ENCODE measurements at regions of chr11 and their contacts with region 1.

Region 1: DNA sequence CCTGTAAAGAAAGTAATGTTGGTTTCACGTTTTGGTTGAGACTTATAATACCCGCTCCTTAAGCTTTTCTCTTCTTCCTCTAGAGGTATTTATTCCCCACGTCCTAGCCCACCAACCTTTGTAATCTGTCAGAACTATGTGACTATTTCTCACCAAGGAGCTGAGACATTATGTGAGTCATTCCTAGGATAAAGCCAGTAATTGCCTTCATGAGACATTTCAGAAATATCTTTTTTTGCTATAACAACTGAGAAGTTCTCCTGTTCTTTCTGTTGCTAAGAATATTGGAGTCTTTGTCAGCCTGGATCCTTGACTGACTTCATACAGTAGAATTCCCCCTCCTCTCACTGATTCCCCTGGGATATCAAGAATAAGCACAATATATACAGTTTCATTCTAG is 1497.0 kb upstream of the TENM4 start:
- DNase-seq: no peak
- ATAC-seq: no peak
- H3K4me3 ChIP-seq: no peak overlapping the region
- H3K27ac ChIP-seq: no peak overlapping the region
- H3K4me1 ChIP-seq: no peaks in the 10 kb centered on the region
- H3K27me3 ChIP-seq: no peaks in the 10 kb centered on the region
- CTCF ChIP-seq: no peak

Region 2: GRCh38 chr11:80798174-80798573 is 139.7 kb before region 1 on chr11:
- intact Hi-C with region 1: no loop called
- DNase-seq: no peak
- ATAC-seq: no peak
- H3K4me3 ChIP-seq: no peak overlapping the region
- H3K27ac ChIP-seq: no peak overlapping the region
- H3K4me1 ChIP-seq: no peaks in the 10 kb centered on the region
- H3K27me3 ChIP-seq: peaks cover 0 to 3% (median 0%) of the 10 kb centered on the region in 7 donors
- CTCF ChIP-seq: no peak

Region 3: GRCh38 chr11:80873309-80873999 is 64.4 kb before region 1 on chr11:
- intact Hi-C with region 1: loop called in 1 of 10 experiments (anchors 10 kb)
- DNase-seq: no peak
- ATAC-seq: no peak
- H3K4me3 ChIP-seq: no peak overlapping the region
- H3K27ac ChIP-seq: no peak overlapping the region
- H3K4me1 ChIP-seq: no peaks in the 10 kb centered on the region
- H3K27me3 ChIP-seq: no peaks in the 10 kb centered on the region
- CTCF ChIP-seq: no peak

Region 4: GRCh38 chr11:80980221-80980620 is 42.4 kb after region 1 on chr11:
- intact Hi-C with region 1: no loop called
- DNase-seq: no peak
- ATAC-seq: no peak
- H3K4me3 ChIP-seq: no peak overlapping the region
- H3K27ac ChIP-seq: no peak overlapping the region
- H3K4me1 ChIP-seq: no peaks in the 10 kb centered on the region
- H3K27me3 ChIP-seq: no peaks in the 10 kb centered on the region
- CTCF ChIP-seq: no peak

Region 5: GRCh38 chr11:81278991-81279390 is 341.1 kb after region 1 on chr11:
- intact Hi-C with region 1: no loop called
- DNase-seq: no peak
- ATAC-seq: no peak
- H3K4me3 ChIP-seq: no peak overlapping the region
- H3K27ac ChIP-seq: no peak overlapping the region
- H3K4me1 ChIP-seq: no peaks in the 10 kb centered on the region
- H3K27me3 ChIP-seq: no peaks in the 10 kb centered on the region
- CTCF ChIP-seq: no peak

Measured in heart right ventricle (tissue), 16 donors.